Activated CD8-positive, alpha-beta memory T cell treated with anti-CD3 and anti-CD28 coated beads, Interleukin-2, amount 10 ng/mL, durations not matched to agents 7 days and 5 days (primary cell): ENCODE measurements at regions of chr10 and their contacts with region 1.

Region 1: DNA sequence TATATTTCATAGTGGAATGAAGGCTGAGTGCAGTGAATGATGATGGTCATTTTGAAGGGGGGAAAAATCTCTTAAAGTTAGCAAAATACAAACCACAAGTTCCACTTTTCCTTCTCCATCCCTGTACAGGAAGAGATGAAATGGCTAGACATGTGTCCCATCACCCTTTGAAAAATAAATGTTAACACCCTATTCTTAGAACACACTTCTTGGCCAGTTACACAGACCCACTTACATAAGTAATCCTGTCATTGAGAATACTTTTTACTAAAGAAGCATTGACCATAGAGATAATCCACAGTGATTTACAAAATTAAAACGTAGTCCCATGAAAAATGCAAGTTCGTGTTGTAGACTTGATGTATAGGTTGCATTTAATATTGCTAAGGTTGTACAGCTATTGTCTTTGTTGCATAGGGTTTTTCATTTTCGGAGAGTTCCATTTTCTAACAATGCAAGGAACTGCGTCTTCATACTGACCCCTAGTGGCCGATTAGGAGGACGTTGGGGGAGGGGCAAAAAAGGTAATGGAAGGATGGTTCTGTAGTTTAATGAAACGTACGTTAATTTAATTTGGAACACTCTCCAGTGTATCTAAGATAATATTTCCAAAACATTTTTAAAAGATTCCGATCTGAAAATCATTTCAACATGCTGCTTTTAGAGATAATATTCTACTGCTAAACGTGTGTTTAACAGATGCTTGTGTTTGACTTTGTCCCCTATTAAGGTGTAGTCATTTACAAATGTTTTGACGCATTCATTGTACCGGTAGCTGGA is 60.9 kb downstream of the ARMC3 start:
- DNase-seq: peak; percentile 75
- ATAC-seq: peak; percentile 72
- H3K4me3 Mint-ChIP-seq: no peak overlapping the region
- H3K27ac Mint-ChIP-seq: no peak overlapping the region
- H3K4me1 Mint-ChIP-seq: peaks cover 19% of the 10 kb centered on the region
- H3K27me3 Mint-ChIP-seq: peaks cover 14% of the 10 kb centered on the region

Region 2: DNA sequence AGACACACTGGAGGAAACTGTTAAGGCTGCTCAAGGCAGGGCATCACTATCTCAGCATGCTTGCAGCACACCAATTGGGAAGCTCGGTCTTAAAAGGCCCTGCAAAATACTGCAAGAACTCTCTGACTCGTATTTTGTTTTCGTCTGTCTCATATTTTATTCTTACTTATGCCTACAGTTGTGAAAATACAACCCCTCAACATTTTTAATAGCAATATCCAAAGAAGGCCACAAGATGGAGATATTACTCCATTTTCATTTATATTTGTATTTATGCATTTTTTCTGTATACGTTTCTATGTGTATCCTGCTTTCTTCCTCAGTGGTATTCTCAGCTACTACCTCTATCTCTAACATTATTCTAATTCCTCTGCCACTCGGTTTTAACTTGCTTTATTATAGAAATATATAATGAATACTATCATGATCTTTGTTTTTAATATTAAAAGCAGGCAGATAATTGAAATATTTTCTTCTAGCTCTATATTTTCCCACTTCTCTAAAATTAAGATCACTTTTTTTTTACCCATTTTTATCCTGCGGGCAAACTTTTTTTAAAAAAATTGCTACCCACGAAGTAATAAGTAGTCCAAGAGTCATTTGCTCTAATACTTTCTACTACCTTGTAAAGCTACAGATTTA is 995.3 kb before region 1 on chr10:
- CTCF ChIA-PET with region 1: interaction called, 10 read pairs
- DNase-seq: no peak
- ATAC-seq: no peak
- H3K4me3 Mint-ChIP-seq: no peak overlapping the region
- H3K27ac Mint-ChIP-seq: no peak overlapping the region
- H3K4me1 Mint-ChIP-seq: peaks cover 11% of the 10 kb centered on the region
- H3K27me3 Mint-ChIP-seq: no peaks in the 10 kb centered on the region

Region 3: GRCh38 chr10:22010973-22011408 is 977.8 kb before region 1 on chr10:
- CTCF ChIA-PET with region 1: interaction called, 12 read pairs
- DNase-seq: no peak
- ATAC-seq: no peak
- H3K4me3 Mint-ChIP-seq: no peak overlapping the region
- H3K27ac Mint-ChIP-seq: no peak overlapping the region
- H3K4me1 Mint-ChIP-seq: no peaks in the 10 kb centered on the region
- H3K27me3 Mint-ChIP-seq: peaks cover 26% of the 10 kb centered on the region

Region 4: GRCh38 chr10:22874189-22874854 is 114.4 kb before region 1 on chr10:
- CTCF ChIA-PET with region 1: no interaction called
- DNase-seq: no peak
- ATAC-seq: no peak
- H3K4me3 Mint-ChIP-seq: no peak overlapping the region
- H3K27ac Mint-ChIP-seq: no peak overlapping the region
- H3K4me1 Mint-ChIP-seq: no peaks in the 10 kb centered on the region
- H3K27me3 Mint-ChIP-seq: peaks cover 5% of the 10 kb centered on the region

Region 5: DNA sequence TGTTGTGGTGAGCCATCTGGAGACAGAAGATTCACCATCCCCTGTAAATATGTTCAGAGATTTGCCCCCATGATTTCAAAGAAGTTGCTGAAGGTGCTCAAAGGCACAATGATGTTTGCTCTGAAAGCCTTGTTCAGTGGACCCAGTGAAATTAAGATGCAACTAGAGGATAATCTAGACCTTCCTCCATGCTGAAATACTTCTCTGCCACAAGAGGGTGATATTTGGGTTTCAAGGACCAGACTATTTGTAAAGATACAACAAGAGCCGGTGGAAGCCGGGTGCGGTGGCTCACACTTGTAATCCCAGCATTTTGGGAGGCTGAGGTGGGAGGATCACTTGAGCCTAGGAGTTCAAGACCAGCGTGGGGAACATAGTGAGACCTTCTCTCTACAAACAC is 93.1 kb after region 1 on chr10:
- CTCF ChIA-PET with region 1: no interaction called
- DNase-seq: no peak
- ATAC-seq: no peak
- H3K4me3 Mint-ChIP-seq: no peak overlapping the region
- H3K27ac Mint-ChIP-seq: no peak overlapping the region
- H3K4me1 Mint-ChIP-seq: no peaks in the 10 kb centered on the region
- H3K27me3 Mint-ChIP-seq: peaks cover 57% of the 10 kb centered on the region